ENCODE measurements at regions of chr16 and their contacts with region 1.

Region 1: GRCh38 chr16:4624015-4624826 is at the start of gene MGRN1:
- DNase-seq: peak; percentile 98
- H3K4me3 ChIP-seq: peak within 1 kb of the TSS; percentile 78
- H3K27ac ChIP-seq: peak within 1 kb of the TSS; percentile 70 to 81
- H3K4me1 ChIP-seq: peaks cover 0 to 14% of the 10 kb centered on the region in 2 experiments; a peak in 1 of 4 replicates
- H3K27me3 ChIP-seq: no peaks in the 10 kb centered on the region
- CTCF ChIP-seq: peak; percentile 99
- EP300 ChIP-seq: no peak
- RAD21 ChIP-seq: no peak
- polyA plus RNA-seq, gene MGRN1: 5.5 and 13.3 TPM in 2 replicates

Region 2: DNA sequence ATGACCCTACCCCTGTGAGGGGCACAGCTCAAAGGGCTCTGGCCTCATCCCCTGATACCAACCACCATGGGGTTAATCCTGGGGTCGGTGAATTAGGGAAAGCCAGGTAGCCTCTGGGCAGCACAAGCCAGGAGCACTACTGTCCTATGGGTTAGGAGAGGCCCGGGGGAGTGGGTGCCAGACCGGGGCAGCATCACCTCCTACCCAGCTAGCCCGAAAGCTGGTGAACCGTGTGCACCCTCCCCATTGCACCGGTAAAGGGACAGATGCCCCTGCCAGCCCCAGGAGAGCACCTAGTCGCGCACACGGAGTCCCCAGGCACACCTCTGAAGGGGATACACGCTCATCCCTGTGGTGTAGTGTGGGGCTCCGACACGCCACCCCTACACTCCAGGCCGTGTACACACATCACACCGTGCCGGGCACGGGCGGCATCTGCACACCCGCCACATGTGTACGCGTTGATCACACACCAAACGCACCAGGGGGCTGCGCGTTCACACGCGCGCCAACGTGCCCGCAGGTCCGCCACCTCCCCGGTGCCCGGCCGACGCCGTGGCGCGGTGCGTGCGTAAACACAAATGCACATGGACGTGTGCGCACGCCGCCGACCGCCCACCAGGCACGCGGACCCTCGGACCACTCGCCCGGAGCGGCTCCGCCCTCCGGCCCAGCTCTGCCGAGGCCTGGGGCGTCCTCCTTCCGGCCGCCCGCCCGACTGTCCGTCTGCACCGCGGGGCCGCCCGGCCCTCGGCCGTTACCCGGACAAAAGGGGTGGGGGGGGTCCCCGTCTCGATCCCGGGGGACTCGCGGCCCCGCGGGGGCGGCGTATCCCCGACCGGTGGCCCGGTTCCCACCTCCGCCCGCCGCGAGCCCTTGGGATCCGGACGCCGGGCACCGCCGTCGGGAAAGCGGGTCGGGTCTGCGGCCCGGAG is 10.3 kb before region 1 on chr16:
- CTCF ChIA-PET with region 1: interaction called, 11 read pairs
- POLR2A ChIA-PET with region 1: interaction called, 3 read pairs
- DNase-seq: peak; percentile 79
- H3K4me3 ChIP-seq: peak overlapping the region; percentile 83 to 94
- H3K27ac ChIP-seq: peak overlapping the region; percentile 78 to 84; a peak in 3 of 4 replicates
- H3K4me1 ChIP-seq: peaks cover 13 to 38% of the 10 kb centered on the region in 2 experiments; a peak in 3 of 4 replicates
- H3K27me3 ChIP-seq: no peaks in the 10 kb centered on the region
- CTCF ChIP-seq: no peak
- EP300 ChIP-seq: no peak
- RAD21 ChIP-seq: no peak

Region 3: GRCh38 chr16:4637501-4638166 is 13.4 kb after region 1 on chr16:
- CTCF ChIA-PET with region 1: interaction called, 16 read pairs
- POLR2A ChIA-PET with region 1: no interaction called
- DNase-seq: no peak
- H3K4me3 ChIP-seq: no peak overlapping the region
- H3K27ac ChIP-seq: no peak overlapping the region
- H3K4me1 ChIP-seq: no peaks in the 10 kb centered on the region
- H3K27me3 ChIP-seq: no peaks in the 10 kb centered on the region
- CTCF ChIP-seq: no peak
- EP300 ChIP-seq: no peak
- RAD21 ChIP-seq: no peak

Region 4: DNA sequence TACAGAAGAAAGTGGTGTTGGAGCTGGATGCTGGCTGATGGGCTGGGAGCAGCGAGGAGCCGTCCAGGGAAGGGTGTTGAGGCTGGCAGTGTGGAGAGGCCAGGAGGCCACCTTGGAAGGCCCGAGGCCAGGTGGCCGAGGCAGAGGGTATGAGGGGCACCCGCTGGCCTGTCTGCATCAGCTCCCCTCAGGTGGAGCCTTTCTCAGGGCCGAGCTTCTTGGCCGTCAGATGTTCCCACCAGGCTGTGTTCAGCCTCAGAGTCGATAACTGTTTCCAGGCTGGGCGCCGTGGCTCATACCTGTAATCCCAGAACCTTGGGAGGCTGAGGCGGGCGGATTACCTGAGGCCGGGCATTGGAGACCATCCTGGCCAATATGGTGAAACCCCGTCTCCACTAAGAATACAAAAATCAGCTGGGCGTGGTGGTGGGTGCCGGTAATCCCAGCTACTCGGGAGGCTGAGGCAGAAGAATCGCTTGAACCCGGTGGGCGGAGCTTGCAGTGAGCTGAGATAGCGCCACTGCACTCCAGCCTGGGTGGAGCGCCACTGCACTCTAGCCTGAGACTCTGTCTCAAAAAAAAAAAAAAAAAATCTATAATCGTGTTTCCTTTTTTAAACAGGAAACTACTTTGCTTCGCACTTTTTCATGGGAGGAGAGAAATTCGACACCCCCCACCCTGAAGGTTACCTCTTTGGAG is 25.7 kb after region 1 on chr16:
- CTCF ChIA-PET with region 1: interaction called, 16 read pairs
- POLR2A ChIA-PET with region 1: no interaction called
- DNase-seq: no peak
- H3K4me3 ChIP-seq: no peak overlapping the region
- H3K27ac ChIP-seq: no peak overlapping the region
- H3K4me1 ChIP-seq: no peaks in the 10 kb centered on the region
- H3K27me3 ChIP-seq: no peaks in the 10 kb centered on the region
- CTCF ChIP-seq: no peak
- EP300 ChIP-seq: no peak
- RAD21 ChIP-seq: no peak

Region 5: DNA sequence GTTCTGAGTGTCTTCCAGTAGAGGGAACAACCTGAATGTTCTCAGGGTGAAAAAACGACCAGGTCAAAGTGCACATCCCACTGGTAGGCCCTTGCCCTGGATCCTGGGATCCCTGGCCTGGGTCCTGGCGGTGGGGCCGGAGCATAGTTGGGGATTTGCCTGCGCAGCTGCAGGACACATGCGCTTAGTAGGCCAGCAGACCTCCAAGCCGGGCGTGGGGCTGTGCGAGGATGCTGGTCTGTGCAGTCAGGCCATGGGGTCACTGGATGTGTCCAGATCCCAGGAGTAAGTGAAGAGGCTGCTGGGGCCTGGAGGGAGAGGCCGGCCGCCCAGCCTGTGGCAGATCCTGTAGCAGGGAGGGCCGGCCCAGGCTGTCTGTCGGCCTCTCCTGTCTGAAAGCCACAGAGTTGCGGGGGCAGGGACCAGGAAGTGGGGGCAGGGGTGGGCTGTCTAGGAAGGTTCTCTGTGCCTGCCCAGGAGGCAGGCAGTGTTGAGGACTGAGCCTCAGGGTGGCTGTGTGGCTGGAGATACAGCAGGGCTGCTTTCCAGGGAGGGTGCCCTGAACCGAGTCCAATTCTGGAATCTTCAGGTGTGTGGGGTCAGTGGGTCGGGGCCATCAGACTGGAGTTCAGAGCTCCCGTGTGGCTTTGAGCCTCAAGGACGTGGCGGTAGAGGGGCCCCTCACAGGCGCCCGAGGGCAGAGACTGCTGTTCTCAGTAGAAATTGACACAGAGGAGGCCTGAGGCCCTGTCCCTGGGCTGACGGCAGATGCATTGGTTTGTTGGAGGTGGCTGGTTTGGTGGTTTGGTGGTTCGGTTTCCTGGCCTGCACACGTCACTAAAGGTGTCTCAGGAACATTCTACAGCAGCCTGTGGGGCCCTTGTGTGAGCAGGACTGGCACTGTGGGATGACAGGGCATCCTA is 51.9 kb after region 1 on chr16:
- CTCF ChIA-PET with region 1: no interaction called
- POLR2A ChIA-PET with region 1: no interaction called
- DNase-seq: no peak
- H3K4me3 ChIP-seq: no peak overlapping the region
- H3K27ac ChIP-seq: no peak overlapping the region
- H3K4me1 ChIP-seq: peaks cover 0 to 4% of the 10 kb centered on the region in 2 experiments; a peak in 1 of 4 replicates
- H3K27me3 ChIP-seq: no peaks in the 10 kb centered on the region
- CTCF ChIP-seq: no peak
- EP300 ChIP-seq: no peak
- RAD21 ChIP-seq: no peak

Measured in SK-N-SH (cell line).